GM18951 (cell line): ENCODE measurements at regions of chr3 and their contacts with region 1.

Region 1: GRCh38 chr3:161559177-161559998 is 62.8 kb downstream of the OTOL1 start:
- POLR2A ChIP-seq: no peak

Region 2: DNA sequence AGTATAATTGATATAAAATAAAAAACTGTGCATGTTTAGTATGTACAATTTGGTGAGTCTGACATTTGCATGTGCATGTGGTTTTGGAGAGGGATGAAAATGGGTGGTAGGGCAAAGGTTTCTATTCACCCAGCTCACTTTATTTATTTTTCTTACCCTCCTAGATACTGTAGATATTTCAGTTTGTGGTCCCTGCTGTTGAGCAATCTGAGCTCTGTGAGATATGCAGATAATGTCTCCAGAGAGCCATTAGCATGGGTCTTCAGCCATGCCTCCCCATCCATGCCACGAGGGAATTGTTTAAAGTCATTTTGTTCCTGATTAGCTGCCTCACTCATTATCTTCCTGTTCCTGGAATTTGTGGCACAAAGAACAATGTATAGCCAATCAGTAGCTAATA is 409.9 kb before region 1 on chr3:
- in situ Hi-C with region 1: no loop called
- POLR2A ChIP-seq: no peak

Region 3: GRCh38 chr3:161851941-161852566 is 292.7 kb after region 1 on chr3:
- in situ Hi-C with region 1: loop called (anchors 25 kb)
- POLR2A ChIP-seq: no peak